Mammary epithelial cell (primary cell): ENCODE measurements at regions of chr1 and their contacts with region 1.

Region 1: DNA sequence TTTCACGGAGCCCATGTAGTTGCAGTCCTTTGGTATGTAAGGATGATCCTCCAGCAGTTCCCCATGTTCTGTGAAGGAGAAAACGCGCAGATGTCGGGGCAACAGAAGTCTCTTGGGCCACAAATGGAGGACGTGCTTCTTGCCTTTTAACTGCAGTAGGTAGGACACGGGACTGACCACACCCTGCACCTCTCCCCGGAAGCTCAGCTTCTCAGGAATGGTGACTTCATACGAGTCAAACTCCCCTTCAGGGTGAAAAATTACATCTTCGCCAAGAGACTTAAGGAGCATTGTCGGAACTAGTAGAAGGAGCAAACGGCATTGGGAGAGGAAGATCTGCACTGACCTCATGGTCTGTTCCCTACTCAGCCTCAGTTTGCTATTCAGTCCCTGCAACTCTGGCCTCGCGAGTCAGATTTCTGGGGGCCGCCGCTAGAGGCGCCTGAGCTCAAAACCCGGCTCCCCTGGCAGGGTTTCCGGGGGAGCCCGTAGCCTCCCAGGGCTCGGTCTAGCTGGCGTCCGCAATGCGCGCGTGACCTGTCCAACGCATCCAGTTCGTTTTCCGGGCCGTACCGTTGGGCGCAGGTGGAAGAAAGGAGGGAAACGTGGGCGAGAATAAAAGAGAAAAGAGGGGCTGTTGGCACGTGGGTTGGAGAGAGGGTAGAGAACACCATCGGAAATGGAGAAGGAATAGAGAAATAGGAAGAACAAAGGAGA is at the start of gene ADAM30:
- DNase-seq: no peak
- H3K4me3 ChIP-seq: no peak within 1 kb of the TSS
- H3K27ac ChIP-seq: no peak within 1 kb of the TSS
- H3K4me1 ChIP-seq: peaks cover 4% of the 10 kb centered on the region
- H3K27me3 ChIP-seq: no peaks in the 10 kb centered on the region
- CTCF ChIP-seq: no peak
- total RNA-seq, gene ADAM30: not detected

Region 2: GRCh38 chr1:119861546-119862089 is 34.5 kb before region 1 on chr1:
- CTCF ChIA-PET with region 1: no interaction called
- dilution Hi-C with region 1: no loop called
- in situ Hi-C with region 1: no loop called
- intact Hi-C with region 1: loop called (anchors 1 kb)
- DNase-seq: no peak
- H3K4me3 ChIP-seq: no peak overlapping the region
- H3K27ac ChIP-seq: no peak overlapping the region
- H3K4me1 ChIP-seq: peaks cover 11% of the 10 kb centered on the region
- H3K27me3 ChIP-seq: no peaks in the 10 kb centered on the region
- CTCF ChIP-seq: no peak